Activated CD4-positive, alpha-beta T cell treated with anti-CD3 and anti-CD28 coated beads for 36 hours (primary cell): ENCODE measurements at regions of chr6 and their contacts with region 1.

Region 1: DNA sequence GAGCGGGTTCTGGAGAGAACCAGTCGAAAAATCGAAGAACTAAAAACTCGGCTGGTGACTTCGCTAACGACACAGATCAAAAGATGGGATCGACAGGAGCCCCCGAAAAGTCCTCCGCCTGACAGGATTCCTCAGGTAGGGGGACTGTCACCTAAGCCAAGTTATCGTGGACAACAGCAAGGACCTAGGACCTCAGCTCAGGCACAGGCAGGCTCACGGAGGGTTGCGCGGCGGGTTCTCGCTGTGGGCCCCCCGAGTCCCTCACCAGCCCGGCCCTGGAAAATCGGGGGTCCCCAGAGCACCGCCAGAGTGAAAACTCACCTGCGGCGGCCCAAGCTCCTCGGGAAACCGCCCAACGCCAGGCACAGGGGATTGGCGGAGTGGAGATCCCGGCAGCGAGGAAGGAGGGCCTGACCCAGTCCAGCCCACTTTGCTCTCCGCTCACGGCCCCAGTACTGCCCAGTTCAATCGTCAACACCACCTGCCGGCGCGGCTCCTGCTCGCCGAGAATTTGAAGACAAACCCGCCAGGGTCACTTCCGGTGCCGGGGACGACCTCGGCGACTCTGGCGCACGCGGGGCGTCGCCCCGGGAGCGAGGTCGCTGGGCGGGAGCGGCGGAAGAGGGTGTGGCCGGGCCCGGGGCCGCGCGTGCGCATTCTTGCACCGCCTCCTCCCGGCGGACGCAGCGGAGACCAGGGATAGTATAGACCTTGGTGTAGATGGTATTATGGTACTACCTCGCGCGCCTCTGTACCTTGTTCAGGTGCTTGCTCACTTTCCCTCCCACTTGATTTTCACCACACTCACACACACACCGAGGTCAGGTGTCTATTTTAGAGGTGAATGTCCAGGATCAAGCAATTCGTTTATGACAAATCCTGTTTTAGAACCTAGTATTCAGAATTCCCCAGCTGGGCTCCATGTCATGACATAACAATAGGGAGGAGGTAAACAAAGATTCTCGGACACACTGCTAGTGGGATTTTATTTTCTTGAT is at the start of gene KATNA1:
- DNase-seq: peak; percentile 95
- ATAC-seq: peak; percentile 96
- H3K4me3 Mint-ChIP-seq: peak within 1 kb of the TSS; percentile 90
- H3K27ac Mint-ChIP-seq: peak within 1 kb of the TSS; percentile 87
- H3K4me1 Mint-ChIP-seq: peaks cover 20% of the 10 kb centered on the region
- H3K27me3 Mint-ChIP-seq: no peaks in the 10 kb centered on the region
- total RNA-seq, gene KATNA1: 18.1 to 21.6 TPM

Region 2: DNA sequence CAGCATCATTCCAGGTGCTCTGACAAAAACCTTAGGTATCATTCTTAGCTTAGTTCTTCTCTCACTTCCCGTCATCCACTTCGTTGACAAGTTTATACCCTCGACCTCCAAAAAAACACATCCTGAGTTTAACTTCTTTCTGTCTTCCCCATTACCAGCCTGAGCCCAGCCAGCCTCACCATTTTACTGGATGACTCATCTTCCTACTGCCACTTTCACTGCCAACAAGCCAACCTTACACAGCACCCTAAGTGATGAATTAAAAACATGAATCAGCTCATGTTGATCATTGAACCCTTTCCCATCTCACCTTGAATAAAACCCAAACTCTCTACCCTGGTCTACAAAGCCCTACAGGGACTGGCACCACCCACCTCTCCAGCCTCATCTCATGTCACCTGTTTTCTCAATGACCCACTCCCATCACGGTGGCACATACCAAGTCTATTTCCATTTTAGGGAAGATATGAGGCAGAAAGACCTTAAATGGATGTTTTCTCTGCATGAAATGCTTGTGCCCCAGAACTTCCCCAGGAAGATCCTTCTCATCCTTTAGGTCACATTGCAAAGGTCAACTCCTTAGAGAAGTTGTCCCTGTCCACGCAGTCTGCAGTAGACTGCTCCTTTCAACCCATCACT is 911.6 kb before region 1 on chr6:
- CTCF ChIA-PET with region 1: no interaction called
- POLR2A ChIA-PET with region 1: no interaction called
- intact Hi-C with region 1: no loop called
- DNase-seq: peak; percentile 21
- ATAC-seq: peak; percentile 71
- H3K4me3 Mint-ChIP-seq: no peak overlapping the region
- H3K27ac Mint-ChIP-seq: no peak overlapping the region
- H3K4me1 Mint-ChIP-seq: peaks cover 5% of the 10 kb centered on the region
- H3K27me3 Mint-ChIP-seq: peaks cover 7% of the 10 kb centered on the region

Region 3: GRCh38 chr6:149545754-149546528 is 102.5 kb before region 1 on chr6 and contains the start of gene PPIL4:
- CTCF ChIA-PET with region 1: interaction called, 3 read pairs
- POLR2A ChIA-PET with region 1: no interaction called
- intact Hi-C with region 1: loop called (anchors 1 to 5 kb)
- DNase-seq: peak; percentile 98
- ATAC-seq: peak; percentile 85
- H3K4me3 Mint-ChIP-seq: peak within 1 kb of the TSS; percentile 97
- H3K27ac Mint-ChIP-seq: peak within 1 kb of the TSS; percentile 98
- H3K4me1 Mint-ChIP-seq: peaks cover 42% of the 10 kb centered on the region
- H3K27me3 Mint-ChIP-seq: no peaks in the 10 kb centered on the region
- total RNA-seq, gene PPIL4: 22.6 to 26.8 TPM